ENCODE measurements at regions of chr15 and their contacts with region 1.

Region 1: GRCh38 chr15:77543159-77543882 is 89.4 kb downstream of the LINGO1 start:
- DNase-seq: peak; percentile 90 to 96
- H3K4me3 ChIP-seq: peak overlapping the region; percentile 32 to 52 (median 40)
- H3K27ac ChIP-seq: peak overlapping the region in 4 of 5 donors; percentile 14 to 64 (median 52)
- H3K4me1 ChIP-seq: peaks cover 8 to 62% (median 44%) of the 10 kb centered on the region in 4 donors
- H3K27me3 ChIP-seq: no peaks in the 10 kb centered on the region
- CTCF ChIP-seq: peak in 6 of 7 experiments; percentile 28 to 98 (median 96)
- EP300 ChIP-seq: no peak
- POLR2A ChIP-seq: no peak

Region 2: DNA sequence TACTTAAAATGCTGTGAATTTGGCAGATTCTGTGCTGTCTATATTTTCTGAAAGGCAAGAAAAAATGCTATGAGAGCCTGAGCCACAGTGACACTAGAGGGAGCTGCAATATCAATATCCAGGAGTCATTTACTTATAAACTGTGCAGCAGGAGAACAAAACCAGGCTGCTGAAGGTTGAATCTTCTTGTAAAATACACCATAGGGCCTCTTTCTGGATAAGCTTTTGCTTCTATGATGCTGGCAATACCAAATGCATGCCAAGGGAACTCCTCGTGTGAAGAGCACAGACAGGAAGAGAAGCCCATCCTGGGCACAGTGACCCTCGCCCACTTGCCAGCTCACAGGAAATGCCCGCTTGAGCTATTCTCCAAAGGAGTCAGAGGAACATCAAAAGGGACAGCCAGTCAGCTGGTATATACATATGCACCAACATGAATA is 424.4 kb before region 1 on chr15:
- intact Hi-C with region 1: loop called (anchors 10 kb)
- DNase-seq: peak; percentile 40 to 91
- H3K4me3 ChIP-seq: no peak overlapping the region
- H3K27ac ChIP-seq: no peak overlapping the region
- H3K4me1 ChIP-seq: peaks cover 5 to 11% (median 6%) of the 10 kb centered on the region in 4 donors
- H3K27me3 ChIP-seq: no peaks in the 10 kb centered on the region
- CTCF ChIP-seq: peak in 5 of 7 experiments; percentile 48 to 76 (median 61)
- EP300 ChIP-seq: no peak
- POLR2A ChIP-seq: no peak

Region 3: GRCh38 chr15:77496710-77497103 is 46.6 kb before region 1 on chr15:
- intact Hi-C with region 1: loop called (anchors 10 kb)
- DNase-seq: peak; percentile 80 to 93
- H3K4me3 ChIP-seq: peak overlapping the region in 2 of 4 donors; percentile 1 to 5
- H3K27ac ChIP-seq: peak overlapping the region in 4 of 5 donors; percentile 55 to 76 (median 72)
- H3K4me1 ChIP-seq: peaks cover 22 to 52% (median 37%) of the 10 kb centered on the region in 4 donors
- H3K27me3 ChIP-seq: no peaks in the 10 kb centered on the region
- CTCF ChIP-seq: peak in 5 of 7 experiments; percentile 76 to 89 (median 81)
- EP300 ChIP-seq: no peak
- POLR2A ChIP-seq: no peak

Measured in stomach (tissue), 19 donors.